Right ventricle myocardium inferior (tissue), 1 donor: ENCODE measurements at regions of chr20 and their contacts with region 1.

Region 1: DNA sequence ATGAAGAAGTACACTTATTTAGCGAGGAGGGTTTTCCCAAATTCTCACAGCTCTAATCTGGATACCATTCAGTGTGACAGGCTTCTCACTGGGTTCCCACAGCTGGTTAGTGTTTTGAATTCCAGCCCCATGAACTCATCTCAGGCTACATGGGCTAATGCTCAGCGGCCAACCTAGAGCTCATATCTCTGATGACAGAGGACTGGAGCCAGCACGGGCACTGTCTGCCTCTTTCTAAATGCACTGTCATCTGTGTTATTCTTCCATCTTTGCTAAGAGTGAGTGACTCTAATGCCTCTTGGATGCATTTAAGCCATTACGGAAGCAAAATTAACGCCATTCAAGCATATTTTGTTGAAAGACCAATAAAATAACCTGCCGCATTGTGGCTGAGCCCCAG is 308.9 kb upstream of the JAG1 start:
- DNase-seq: peak; percentile 71
- ATAC-seq: peak; percentile 98

Region 2: DNA sequence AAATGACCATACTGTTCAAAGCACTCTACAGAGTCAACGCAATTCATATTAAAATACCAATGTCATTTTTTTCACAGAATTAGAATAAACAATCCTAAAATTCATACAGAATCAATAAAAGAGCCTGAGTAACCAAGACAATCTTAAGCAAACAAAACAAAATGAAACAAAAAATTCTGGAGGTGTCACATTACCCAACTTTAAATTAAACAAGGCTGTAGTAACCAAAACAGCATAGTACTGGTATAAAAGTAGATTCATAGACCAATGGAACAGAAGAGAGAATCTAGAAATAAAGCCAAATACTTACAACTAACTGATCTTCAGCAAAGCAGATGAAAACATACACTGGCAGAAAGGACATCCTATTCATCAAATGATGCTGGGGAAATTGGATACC is 38.0 kb after region 1 on chr20:
- intact Hi-C with region 1: loop called (anchors 2 kb)
- DNase-seq: no peak
- ATAC-seq: no peak

Region 3: GRCh38 chr20:11054266-11054993 is 71.7 kb after region 1 on chr20:
- intact Hi-C with region 1: no loop called
- DNase-seq: peak; percentile 42
- ATAC-seq: no peak

Region 4: GRCh38 chr20:11064946-11065345 is 82.3 kb after region 1 on chr20:
- intact Hi-C with region 1: loop called (anchors 2 kb)
- DNase-seq: no peak
- ATAC-seq: peak; percentile 84

Region 5: GRCh38 chr20:11108102-11108810 is 125.6 kb after region 1 on chr20:
- intact Hi-C with region 1: loop called (anchors 5 kb)
- DNase-seq: no peak
- ATAC-seq: peak; percentile 92